Left lung (tissue), 14 donors: ENCODE measurements at regions of chr1 and their contacts with region 1.

Region 1: DNA sequence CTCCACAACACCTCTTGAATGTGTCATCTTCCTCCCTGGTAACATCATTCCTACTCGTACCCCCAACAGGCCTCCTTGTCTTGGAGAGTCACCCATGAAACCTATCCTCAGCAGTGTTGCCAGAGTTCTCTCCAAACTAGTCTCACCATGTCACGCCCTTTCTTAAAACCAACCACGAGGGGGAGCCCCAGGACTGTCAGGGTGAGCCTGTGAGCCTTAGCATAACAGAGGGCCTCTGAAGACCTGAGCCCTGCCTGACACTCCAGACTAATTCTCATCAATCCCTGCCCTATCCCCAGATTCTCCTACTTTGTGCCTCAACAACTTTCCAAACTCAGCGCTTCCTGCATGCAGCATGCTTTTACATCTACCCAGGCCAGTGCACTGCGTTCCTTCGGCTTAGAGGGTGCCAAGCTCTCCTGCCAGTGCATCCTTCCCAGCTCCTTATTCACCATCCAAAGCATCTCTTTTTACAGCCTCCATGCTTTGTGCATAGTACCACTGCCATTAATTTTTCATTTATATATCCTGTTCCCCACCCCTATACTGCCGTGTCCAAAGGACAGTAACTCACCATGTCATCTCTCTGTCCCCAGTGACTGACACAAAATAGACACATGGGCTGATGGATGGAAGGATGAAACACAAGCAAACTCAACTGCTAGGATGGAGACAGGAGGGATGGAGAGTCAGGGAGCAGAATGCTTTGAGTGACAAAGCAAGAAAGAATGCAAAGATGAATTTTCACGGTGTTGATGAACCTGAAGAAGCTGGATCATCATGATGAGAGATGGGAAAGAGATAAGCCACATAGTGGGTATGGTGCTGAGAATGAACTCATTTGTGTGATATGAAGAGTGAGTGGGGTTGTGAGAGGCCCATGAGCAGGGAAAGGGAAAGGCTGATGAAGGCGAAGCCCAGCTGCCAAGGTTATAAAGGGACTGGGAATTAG is 34.0 kb downstream of the ZNF697 start:
- DNase-seq: peak; percentile 76 to 93 (median 83)
- ATAC-seq: peak; percentile 93
- H3K4me3 ChIP-seq: no peak overlapping the region
- H3K27ac ChIP-seq: no peak overlapping the region
- H3K4me1 ChIP-seq: peaks cover 4 to 5% of the 10 kb centered on the region in 2 donors
- H3K27me3 ChIP-seq: no peaks in the 10 kb centered on the region
- CTCF ChIP-seq: peak; percentile 70 to 73

Region 2: GRCh38 chr1:119517112-119517511 is 96.9 kb before region 1 on chr1:
- intact Hi-C with region 1: no loop called
- DNase-seq: no peak
- ATAC-seq: no peak
- H3K4me3 ChIP-seq: no peak overlapping the region
- H3K27ac ChIP-seq: no peak overlapping the region
- H3K4me1 ChIP-seq: no peaks in the 10 kb centered on the region
- H3K27me3 ChIP-seq: no peaks in the 10 kb centered on the region
- CTCF ChIP-seq: no peak

Region 3: DNA sequence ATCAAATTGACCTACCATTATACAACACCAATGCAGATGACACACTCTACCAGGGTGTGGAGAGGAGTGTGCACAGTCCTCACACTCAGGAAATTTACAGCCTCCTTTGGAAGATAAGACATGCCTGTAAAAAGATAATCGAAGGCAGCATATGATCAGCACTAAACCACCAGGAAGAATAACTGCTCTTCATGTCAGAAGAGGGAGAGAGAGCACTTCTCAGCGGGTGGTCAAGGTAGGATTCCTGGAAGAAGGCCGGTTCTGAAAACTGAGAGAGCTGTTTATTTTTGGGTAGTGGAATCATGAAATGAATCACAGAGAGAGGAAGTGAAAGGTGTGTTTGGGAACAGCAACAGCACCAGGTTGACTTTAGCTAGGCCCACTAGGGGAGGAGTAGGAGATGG is 48.0 kb after region 1 on chr1:
- intact Hi-C with region 1: loop called in 1 of 2 experiments (anchors 5 kb)
- DNase-seq: no peak
- ATAC-seq: peak; percentile 10
- H3K4me3 ChIP-seq: no peak overlapping the region
- H3K27ac ChIP-seq: no peak overlapping the region
- H3K4me1 ChIP-seq: no peaks in the 10 kb centered on the region
- H3K27me3 ChIP-seq: no peaks in the 10 kb centered on the region
- CTCF ChIP-seq: no peak

Region 4: DNA sequence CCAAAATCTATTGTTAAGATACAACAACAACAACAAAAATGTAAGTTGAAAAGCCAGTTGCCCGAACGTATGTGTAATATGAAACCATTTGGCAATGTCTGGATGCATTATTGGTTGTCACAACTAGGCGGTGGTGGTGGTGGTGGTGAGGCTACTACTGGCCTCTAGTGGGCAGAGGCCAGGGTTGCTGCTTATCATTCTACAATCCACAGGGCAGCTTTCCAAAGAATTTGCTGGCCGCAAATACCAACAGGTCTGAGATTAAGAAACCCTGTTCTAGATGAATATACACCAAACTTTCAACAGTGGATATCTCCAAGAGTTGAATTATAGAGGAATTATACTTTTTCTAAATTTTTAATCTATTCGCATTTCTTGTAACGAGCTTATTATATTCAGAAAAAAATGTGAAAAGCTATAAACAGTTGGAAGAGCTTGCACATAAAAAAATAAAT is 60.8 kb after region 1 on chr1:
- intact Hi-C with region 1: loop called in 1 of 2 experiments (anchors 5 kb)
- DNase-seq: peak in 3 of 4 donors; percentile 37 to 72 (median 60)
- ATAC-seq: peak; percentile 84
- H3K4me3 ChIP-seq: peak overlapping the region in 1 of 2 donors; percentile 28
- H3K27ac ChIP-seq: no peak overlapping the region
- H3K4me1 ChIP-seq: peaks cover 6 to 13% of the 10 kb centered on the region in 2 donors
- H3K27me3 ChIP-seq: no peaks in the 10 kb centered on the region
- CTCF ChIP-seq: peak in 1 of 2 donors; percentile 53